Caco-2 (cell line): ENCODE measurements at regions of chr1 and their contacts with region 1.

Region 1: GRCh38 chr1:212062832-212063438 is 27.4 kb downstream of the DTL start:
- DNase-seq: peak in 1 of 2 experiments; percentile 13
- H3K4me3 ChIP-seq: no peak overlapping the region
- H3K4me3 Mint-ChIP-seq: no peak overlapping the region
- H3K27ac Mint-ChIP-seq: no peak overlapping the region
- H3K4me1 ChIP-seq: no peaks in the 10 kb centered on the region
- H3K4me1 Mint-ChIP-seq: no peaks in the 10 kb centered on the region
- H3K27me3 ChIP-seq: no peaks in the 10 kb centered on the region
- H3K27me3 Mint-ChIP-seq: no peaks in the 10 kb centered on the region
- CTCF ChIP-seq: peak; percentile 63 to 64

Region 2: GRCh38 chr1:211935448-211935970 is 127.4 kb before region 1 on chr1:
- CTCF ChIA-PET with region 1: no interaction called
- POLR2A ChIA-PET with region 1: no interaction called
- intact Hi-C with region 1: no loop called
- DNase-seq: no peak
- H3K4me3 ChIP-seq: no peak overlapping the region
- H3K4me3 Mint-ChIP-seq: no peak overlapping the region
- H3K27ac Mint-ChIP-seq: no peak overlapping the region
- H3K4me1 ChIP-seq: no peaks in the 10 kb centered on the region
- H3K4me1 Mint-ChIP-seq: no peaks in the 10 kb centered on the region
- H3K27me3 ChIP-seq: no peaks in the 10 kb centered on the region
- H3K27me3 Mint-ChIP-seq: no peaks in the 10 kb centered on the region
- CTCF ChIP-seq: no peak

Region 3: GRCh38 chr1:212007886-212008285 is 55.0 kb before region 1 on chr1:
- CTCF ChIA-PET with region 1: no interaction called
- POLR2A ChIA-PET with region 1: no interaction called
- intact Hi-C with region 1: no loop called
- DNase-seq: no peak
- H3K4me3 ChIP-seq: no peak overlapping the region
- H3K4me3 Mint-ChIP-seq: no peak overlapping the region
- H3K27ac Mint-ChIP-seq: no peak overlapping the region
- H3K4me1 ChIP-seq: peaks cover 13% of the 10 kb centered on the region
- H3K4me1 Mint-ChIP-seq: peaks cover 12% of the 10 kb centered on the region
- H3K27me3 ChIP-seq: no peaks in the 10 kb centered on the region
- H3K27me3 Mint-ChIP-seq: no peaks in the 10 kb centered on the region
- CTCF ChIP-seq: no peak

Region 4: DNA sequence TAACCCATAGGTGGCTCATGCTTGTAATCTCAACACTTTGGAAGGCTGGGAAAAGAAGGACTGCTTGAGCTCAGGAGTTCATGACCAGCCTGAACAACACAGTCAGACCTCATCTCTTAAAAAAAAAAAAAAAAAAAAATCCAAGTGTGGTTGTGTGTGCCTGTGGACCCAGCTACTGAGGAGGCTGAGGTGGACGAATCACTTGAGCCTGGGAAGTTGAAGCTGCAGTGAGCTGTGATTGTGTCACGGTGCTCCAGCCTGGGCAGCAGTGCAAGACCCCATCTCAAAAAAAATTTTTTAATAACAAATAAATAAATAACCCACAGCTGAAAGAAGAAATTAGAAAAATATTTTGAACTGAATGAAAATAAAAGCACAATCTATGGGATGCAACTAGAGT is 41.4 kb before region 1 on chr1:
- CTCF ChIA-PET with region 1: no interaction called
- POLR2A ChIA-PET with region 1: no interaction called
- intact Hi-C with region 1: no loop called
- DNase-seq: no peak
- H3K4me3 ChIP-seq: no peak overlapping the region
- H3K4me3 Mint-ChIP-seq: no peak overlapping the region
- H3K27ac Mint-ChIP-seq: no peak overlapping the region
- H3K4me1 ChIP-seq: no peaks in the 10 kb centered on the region
- H3K4me1 Mint-ChIP-seq: no peaks in the 10 kb centered on the region
- H3K27me3 ChIP-seq: no peaks in the 10 kb centered on the region
- H3K27me3 Mint-ChIP-seq: no peaks in the 10 kb centered on the region
- CTCF ChIP-seq: no peak

Region 5: DNA sequence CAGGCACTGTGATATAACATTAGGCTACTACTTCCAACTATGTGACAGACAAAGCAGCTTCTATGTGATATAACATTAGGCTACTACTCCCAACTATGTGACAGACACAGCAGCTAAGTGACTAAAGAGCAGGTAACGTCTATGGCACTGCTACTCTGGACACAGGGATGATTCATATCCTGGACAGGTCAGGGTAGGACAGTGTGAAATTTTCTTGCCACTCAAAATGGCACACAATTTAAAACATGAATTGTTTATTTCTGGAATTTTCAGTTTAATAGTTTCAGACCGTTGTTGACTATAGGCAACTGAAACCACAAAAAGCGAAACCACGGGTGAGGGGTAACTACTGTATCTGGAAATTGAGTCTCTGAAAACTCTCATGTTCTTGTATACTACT is 22.3 kb before region 1 on chr1:
- CTCF ChIA-PET with region 1: no interaction called
- POLR2A ChIA-PET with region 1: no interaction called
- intact Hi-C with region 1: no loop called
- DNase-seq: no peak
- H3K4me3 ChIP-seq: no peak overlapping the region
- H3K4me3 Mint-ChIP-seq: no peak overlapping the region
- H3K27ac Mint-ChIP-seq: no peak overlapping the region
- H3K4me1 ChIP-seq: peaks cover 4% of the 10 kb centered on the region; the same call in 1 of the 2 replicates
- H3K4me1 Mint-ChIP-seq: peaks cover 31% of the 10 kb centered on the region
- H3K27me3 ChIP-seq: no peaks in the 10 kb centered on the region
- H3K27me3 Mint-ChIP-seq: no peaks in the 10 kb centered on the region
- CTCF ChIP-seq: no peak

Region 6: DNA sequence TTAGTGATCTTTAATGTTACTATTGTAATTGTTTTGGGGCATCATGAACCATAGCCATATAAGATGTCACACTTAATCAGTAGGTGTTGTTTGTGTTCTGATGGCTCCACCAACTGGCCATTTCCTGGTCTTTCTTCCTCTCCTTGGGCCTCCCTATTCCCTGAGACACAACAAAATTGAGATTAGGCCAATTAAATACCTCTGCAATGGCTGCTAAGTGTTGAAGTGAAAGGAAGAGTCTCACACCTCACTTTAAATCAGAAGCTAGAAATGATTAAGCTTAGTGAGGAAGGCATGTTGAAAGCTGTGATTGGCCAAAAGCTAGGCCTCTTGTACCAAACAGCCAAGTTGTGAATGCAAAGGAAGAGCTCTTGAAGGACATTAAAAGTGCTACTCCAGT is 253.0 kb after region 1 on chr1:
- CTCF ChIA-PET with region 1: no interaction called
- POLR2A ChIA-PET with region 1: no interaction called
- intact Hi-C with region 1: loop called (anchors 2 kb)
- DNase-seq: peak in 1 of 2 experiments; percentile 21
- H3K4me3 ChIP-seq: no peak overlapping the region
- H3K4me3 Mint-ChIP-seq: no peak overlapping the region
- H3K27ac Mint-ChIP-seq: no peak overlapping the region
- H3K4me1 ChIP-seq: peaks cover 22% of the 10 kb centered on the region
- H3K4me1 Mint-ChIP-seq: peaks cover 12% of the 10 kb centered on the region
- H3K27me3 ChIP-seq: no peaks in the 10 kb centered on the region
- H3K27me3 Mint-ChIP-seq: no peaks in the 10 kb centered on the region
- CTCF ChIP-seq: peak in 1 of 2 experiments; percentile 15